Ascending aorta (tissue), 2 donors: ENCODE measurements at regions of chr16 and their contacts with region 1.

Region 1: GRCh38 chr16:77868478-77868877 is 80.1 kb downstream of the VAT1L start:
- DNase-seq: no peak
- H3K4me3 ChIP-seq: no peak overlapping the region
- H3K27ac ChIP-seq: peak overlapping the region; percentile 44 to 87
- H3K4me1 ChIP-seq: peaks cover 0 to 13% of the 10 kb centered on the region in 2 donors
- H3K27me3 ChIP-seq: no peaks in the 10 kb centered on the region
- CTCF ChIP-seq: no peak

Region 2: GRCh38 chr16:77801817-77802216 is 66.7 kb before region 1 on chr16:
- intact Hi-C with region 1: loop called (anchors 5 kb)
- DNase-seq: no peak
- H3K4me3 ChIP-seq: no peak overlapping the region
- H3K27ac ChIP-seq: peak overlapping the region; percentile 78 to 81
- H3K4me1 ChIP-seq: peaks cover 0 to 25% of the 10 kb centered on the region in 2 donors
- H3K27me3 ChIP-seq: no peaks in the 10 kb centered on the region
- CTCF ChIP-seq: no peak

Region 3: DNA sequence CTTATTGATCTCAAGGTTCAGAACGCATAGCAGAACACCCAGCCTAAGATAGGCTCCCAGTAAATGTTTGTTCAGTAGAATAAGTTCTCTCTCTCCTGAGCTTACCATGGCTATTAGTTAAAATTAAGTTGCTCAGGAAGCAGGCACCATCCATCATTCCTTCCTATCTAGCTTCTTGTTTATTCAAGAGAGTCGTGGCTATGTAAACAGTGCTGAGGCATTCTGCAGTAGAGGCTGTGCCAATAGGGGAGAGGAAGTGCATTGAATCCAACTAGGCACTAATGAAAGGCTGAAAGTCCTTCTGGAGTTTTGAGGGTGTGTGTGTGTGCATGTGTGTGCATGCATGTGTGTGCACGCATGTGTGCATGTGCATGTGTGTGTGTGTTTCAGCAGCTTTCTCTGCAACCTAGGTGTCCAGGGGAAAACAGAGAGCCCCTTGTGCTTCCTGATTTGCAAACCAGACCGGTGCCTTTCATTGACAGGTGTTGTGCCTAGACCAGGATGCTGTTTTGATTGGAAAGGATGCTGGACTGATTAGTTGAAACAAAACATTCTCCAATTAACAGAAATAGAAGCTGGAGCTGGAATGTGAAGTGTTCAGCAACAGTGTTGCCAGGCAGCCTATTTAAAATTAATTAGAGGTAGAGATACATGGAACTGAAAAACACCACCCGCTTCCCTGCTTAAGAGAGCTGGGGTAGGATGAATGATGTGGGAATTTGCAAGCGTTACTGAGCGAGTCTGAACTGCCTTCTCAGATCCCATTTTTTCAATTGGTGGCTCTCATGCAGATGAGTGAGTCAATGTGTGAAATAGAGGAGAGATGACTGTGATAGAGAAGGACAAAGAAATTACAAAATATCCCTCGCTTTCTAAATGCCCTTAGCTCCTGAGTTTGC is 50.6 kb after region 1 on chr16:
- intact Hi-C with region 1: loop called (anchors 5 kb)
- DNase-seq: no peak
- H3K4me3 ChIP-seq: peak overlapping the region in 1 of 2 donors; percentile 20
- H3K27ac ChIP-seq: peak overlapping the region; percentile 72
- H3K4me1 ChIP-seq: peaks cover 13 to 21% of the 10 kb centered on the region in 2 donors
- H3K27me3 ChIP-seq: no peaks in the 10 kb centered on the region
- CTCF ChIP-seq: no peak

Region 4: GRCh38 chr16:77937473-77938149 is 69.1 kb after region 1 on chr16:
- intact Hi-C with region 1: loop called (anchors 2 kb)
- DNase-seq: no peak
- H3K4me3 ChIP-seq: no peak overlapping the region
- H3K27ac ChIP-seq: peak overlapping the region; percentile 75 to 86
- H3K4me1 ChIP-seq: peaks cover 11 to 32% of the 10 kb centered on the region in 2 donors
- H3K27me3 ChIP-seq: no peaks in the 10 kb centered on the region
- CTCF ChIP-seq: no peak

Region 5: GRCh38 chr16:79707876-79708275 is 1839.4 kb after region 1 on chr16:
- intact Hi-C with region 1: loop called (anchors 10 kb)
- DNase-seq: peak; percentile 25 to 93
- H3K4me3 ChIP-seq: no peak overlapping the region
- H3K27ac ChIP-seq: peak overlapping the region; percentile 75 to 76
- H3K4me1 ChIP-seq: peaks cover 0 to 10% of the 10 kb centered on the region in 2 donors
- H3K27me3 ChIP-seq: no peaks in the 10 kb centered on the region
- CTCF ChIP-seq: no peak